K562 (cell line): ENCODE measurements at regions of chr19 and their contacts with region 1.

Region 1: DNA sequence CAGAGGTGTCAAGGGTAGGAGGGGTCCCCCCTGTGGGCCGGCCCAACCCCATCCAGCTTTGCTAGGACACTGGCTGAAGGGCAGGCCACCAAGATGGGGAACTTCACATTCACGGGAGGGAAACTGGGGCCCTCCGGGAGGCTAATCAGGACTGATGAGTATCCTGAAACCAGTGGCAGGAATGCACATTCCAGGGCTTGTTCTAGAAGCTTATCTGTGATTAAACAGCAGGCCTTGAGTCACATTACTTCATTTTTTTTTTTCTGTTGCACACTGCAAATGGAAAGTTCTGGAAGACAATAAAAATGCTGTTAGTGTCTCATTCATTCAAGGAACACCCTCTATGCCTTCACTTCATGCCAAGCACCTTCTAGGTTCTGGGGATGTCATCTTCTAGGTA is 15.5 kb upstream of the SIGLEC11 start:
- DNase-seq: no peak
- ATAC-seq: no peak
- H3K4me3 ChIP-seq: no peak overlapping the region
- H3K27ac ChIP-seq: no peak overlapping the region
- H3K4me1 ChIP-seq: peaks cover under 1 to 20% of the 10 kb centered on the region in 2 experiments; a peak in 3 of 5 replicates
- H3K27me3 ChIP-seq: peaks cover 0 to 4% of the 10 kb centered on the region in 2 experiments; a peak in 2 of 5 replicates
- CTCF ChIP-seq: no peak
- EP300 ChIP-seq: no peak
- POLR2A ChIP-seq: no peak
- RAD21 ChIP-seq: no peak

Region 2: DNA sequence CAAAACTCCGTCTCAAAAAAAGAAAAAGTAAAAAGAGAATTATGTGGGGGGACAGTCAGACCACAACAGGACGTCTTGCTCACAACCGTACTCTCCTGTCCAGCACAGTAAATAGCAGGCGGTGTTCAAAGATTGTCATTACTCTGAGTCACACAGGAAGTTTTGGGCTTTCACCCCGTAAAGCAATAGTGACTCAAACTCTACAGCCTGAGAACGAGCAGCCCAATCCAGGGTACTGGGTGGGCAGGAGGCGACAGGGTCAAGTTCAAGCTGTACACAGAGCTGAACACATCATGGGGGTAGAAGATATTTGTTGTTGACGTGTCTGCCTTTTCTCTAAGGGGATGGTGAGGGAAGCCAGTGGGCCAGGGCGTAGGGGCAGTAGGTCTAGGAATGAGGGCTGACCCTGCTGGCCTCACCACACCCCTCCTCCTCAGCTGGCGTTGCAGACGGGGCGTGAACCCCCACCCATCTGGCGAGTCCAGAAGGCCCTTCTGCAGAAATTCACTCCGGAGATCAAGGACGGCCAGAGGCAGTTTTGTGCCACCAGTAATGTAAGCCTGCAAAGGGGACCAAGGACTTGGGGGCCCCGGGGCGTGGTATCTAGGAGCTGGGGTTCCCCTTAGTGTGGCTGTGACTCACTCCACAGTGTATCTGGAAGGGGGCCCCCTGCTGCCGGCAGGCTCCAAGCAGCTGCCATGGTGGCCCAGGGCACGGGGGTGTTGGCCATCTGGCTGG is 362.2 kb before region 1 on chr19:
- CTCF ChIA-PET with region 1: no interaction called
- POLR2A ChIA-PET with region 1: no interaction called
- in situ Hi-C with region 1: no loop called
- intact Hi-C with region 1: no loop called
- DNase-seq: no peak
- ATAC-seq: no peak
- H3K4me3 ChIP-seq: no peak overlapping the region
- H3K27ac ChIP-seq: no peak overlapping the region; the same call in 2 of the 3 replicates
- H3K4me1 ChIP-seq: peaks cover 0 to 5% of the 10 kb centered on the region in 2 experiments; a peak in 2 of 5 replicates
- H3K27me3 ChIP-seq: no peaks in the 10 kb centered on the region
- CTCF ChIP-seq: no peak
- EP300 ChIP-seq: no peak
- POLR2A ChIP-seq: no peak
- RAD21 ChIP-seq: no peak

Region 3: GRCh38 chr19:49937750-49938381 is 38.6 kb before region 1 on chr19:
- CTCF ChIA-PET with region 1: interaction called, 61 read pairs
- POLR2A ChIA-PET with region 1: interaction called, 3 read pairs
- in situ Hi-C with region 1: loop called (anchors 5 kb)
- intact Hi-C with region 1: no loop called
- DNase-seq: peak; percentile 75 to 87 (median 80)
- ATAC-seq: peak; percentile 64
- H3K4me3 ChIP-seq: peak overlapping the region; percentile 31
- H3K27ac ChIP-seq: no peak overlapping the region
- H3K4me1 ChIP-seq: peaks cover 8 to 20% of the 10 kb centered on the region in 2 experiments; a peak in 3 of 5 replicates
- H3K27me3 ChIP-seq: no peaks in the 10 kb centered on the region
- CTCF ChIP-seq: peak; percentile 97 to 98 (median 98)
- EP300 ChIP-seq: no peak
- POLR2A ChIP-seq: no peak
- RAD21 ChIP-seq: peak; percentile 95 to 96

Region 4: GRCh38 chr19:50639121-50640112 is 662.9 kb after region 1 on chr19 and contains the start of gene SYT3:
- CTCF ChIA-PET with region 1: no interaction called
- POLR2A ChIA-PET with region 1: no interaction called
- in situ Hi-C with region 1: no loop called
- intact Hi-C with region 1: no loop called
- DNase-seq: peak; percentile 79 to 95 (median 92)
- ATAC-seq: peak; percentile 97
- H3K4me3 ChIP-seq: peak within 1 kb of the TSS; percentile 65
- H3K27ac ChIP-seq: peak within 1 kb of the TSS; percentile 24; the same call in 1 of the 3 replicates
- H3K4me1 ChIP-seq: peaks cover 2 to 19% of the 10 kb centered on the region in 2 experiments; a peak in 3 of 5 replicates
- H3K27me3 ChIP-seq: peaks cover 11 to 29% of the 10 kb centered on the region in 2 experiments; a peak in 4 of 5 replicates
- CTCF ChIP-seq: no peak
- EP300 ChIP-seq: no peak
- POLR2A ChIP-seq: 0 out of 2 replicates have a peak, but pooled peaks have one; percentile 35
- RAD21 ChIP-seq: no peak
- polyA plus RNA-seq, gene SYT3: not detected